Activated CD4-positive, alpha-beta memory T cell treated with anti-CD3 and anti-CD28 coated beads, Interleukin-2, amount 10 ng/mL, durations not matched to agents 7 days and 5 days (primary cell): ENCODE measurements at regions of chr1 and their contacts with region 1.

Region 1: GRCh38 chr1:9110669-9111356 is 18.1 kb downstream of the GPR157 start:
- DNase-seq: peak; percentile 87
- H3K4me3 Mint-ChIP-seq: no peak overlapping the region
- H3K27ac Mint-ChIP-seq: no peak overlapping the region
- H3K4me1 Mint-ChIP-seq: peaks cover 28% of the 10 kb centered on the region
- H3K27me3 Mint-ChIP-seq: no peaks in the 10 kb centered on the region

Region 2: GRCh38 chr1:9084906-9085305 is 25.9 kb before region 1 on chr1:
- CTCF ChIA-PET with region 1: no interaction called
- POLR2A ChIA-PET with region 1: no interaction called
- DNase-seq: no peak
- H3K4me3 Mint-ChIP-seq: no peak overlapping the region
- H3K27ac Mint-ChIP-seq: no peak overlapping the region
- H3K4me1 Mint-ChIP-seq: peaks cover 31% of the 10 kb centered on the region
- H3K27me3 Mint-ChIP-seq: peaks cover 47% of the 10 kb centered on the region

Region 3: GRCh38 chr1:9196129-9197040 is 85.6 kb after region 1 on chr1:
- CTCF ChIA-PET with region 1: interaction called, 11 read pairs
- POLR2A ChIA-PET with region 1: interaction called, 5 read pairs
- DNase-seq: peak; percentile 64
- H3K4me3 Mint-ChIP-seq: no peak overlapping the region
- H3K27ac Mint-ChIP-seq: no peak overlapping the region
- H3K4me1 Mint-ChIP-seq: peaks cover 26% of the 10 kb centered on the region
- H3K27me3 Mint-ChIP-seq: peaks cover 56% of the 10 kb centered on the region

Region 4: GRCh38 chr1:9651565-9652378 is 541.0 kb after region 1 on chr1 and contains the start of gene PIK3CD:
- CTCF ChIA-PET with region 1: no interaction called
- POLR2A ChIA-PET with region 1: no interaction called
- DNase-seq: peak; percentile 59
- H3K4me3 Mint-ChIP-seq: peak within 1 kb of the TSS; percentile 96
- H3K27ac Mint-ChIP-seq: peak within 1 kb of the TSS; percentile 98
- H3K4me1 Mint-ChIP-seq: peaks cover 51% of the 10 kb centered on the region
- H3K27me3 Mint-ChIP-seq: no peaks in the 10 kb centered on the region
- total RNA-seq, gene PIK3CD: 211 to 214 TPM